Common myeloid progenitor, CD34-positive (primary cell): ENCODE measurements at regions of chr9 and their contacts with region 1.

Region 1: DNA sequence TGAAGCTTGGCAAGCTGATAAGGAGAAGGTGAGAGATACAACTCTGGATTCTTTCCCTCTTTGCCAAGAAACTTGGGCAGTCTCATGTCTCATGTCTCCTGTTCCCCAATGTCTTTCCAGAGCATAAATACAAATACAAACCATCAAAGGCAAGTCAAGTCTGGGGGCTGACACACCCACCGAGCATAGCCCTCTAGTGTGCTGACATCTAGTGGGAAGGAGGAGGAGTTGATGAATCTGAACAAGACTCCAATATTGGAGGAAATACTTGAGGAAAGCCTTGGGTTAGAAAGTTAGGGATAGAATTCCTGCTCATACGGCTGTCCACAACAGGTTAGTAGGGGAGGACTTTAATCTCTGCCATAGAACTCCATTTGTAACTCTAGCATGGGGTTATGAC is 8.6 kb downstream of the MLANA start:
- DNase-seq: peak; percentile 38 to 58 (median 56)
- H3K4me3 ChIP-seq: no peak overlapping the region
- H3K27ac ChIP-seq: no peak overlapping the region
- H3K4me1 ChIP-seq: peaks cover 0 to 14% (median 1%) of the 10 kb centered on the region in 4 experiments
- H3K27me3 ChIP-seq: no peaks in the 10 kb centered on the region

Region 2: GRCh38 chr9:5799314-5799713 is 100.0 kb before region 1 on chr9:
- CTCF ChIA-PET with region 1: interaction called, 31 read pairs
- POLR2A ChIA-PET with region 1: no interaction called
- DNase-seq: peak; percentile 73 to 79 (median 77)
- H3K4me3 ChIP-seq: peak overlapping the region in 2 of 7 experiments; percentile 11 to 25
- H3K27ac ChIP-seq: peak overlapping the region in 1 of 2 experiments; percentile 7
- H3K4me1 ChIP-seq: peaks cover 3 to 13% (median 4%) of the 10 kb centered on the region in 4 experiments
- H3K27me3 ChIP-seq: no peaks in the 10 kb centered on the region

Region 3: DNA sequence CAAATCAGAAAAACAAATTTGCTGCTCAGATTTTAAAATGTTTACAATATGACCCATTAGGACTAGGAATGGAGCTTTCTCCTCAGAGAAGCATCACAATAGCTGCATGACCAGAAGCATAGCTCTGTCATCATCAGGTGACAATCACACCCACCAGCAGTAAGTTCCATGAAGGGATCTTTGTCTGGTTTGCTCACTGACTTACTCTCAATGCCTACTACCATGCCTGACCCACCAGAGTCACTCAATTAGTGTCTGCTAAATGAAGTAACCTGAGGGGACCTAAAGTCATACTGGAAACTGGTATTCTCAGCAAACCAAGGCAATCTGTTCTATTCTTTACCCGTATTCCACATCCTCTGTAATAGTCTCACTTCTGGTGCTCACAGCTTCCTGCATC is 74.1 kb before region 1 on chr9:
- CTCF ChIA-PET with region 1: interaction called, 13 read pairs
- POLR2A ChIA-PET with region 1: no interaction called
- DNase-seq: no peak
- H3K4me3 ChIP-seq: peak overlapping the region in 1 of 7 experiments; percentile 53
- H3K27ac ChIP-seq: no peak overlapping the region
- H3K4me1 ChIP-seq: peaks cover 5 to 50% (median 6%) of the 10 kb centered on the region in 4 experiments
- H3K27me3 ChIP-seq: no peaks in the 10 kb centered on the region